ENCODE measurements at regions of chr18 and their contacts with region 1.

Region 1: DNA sequence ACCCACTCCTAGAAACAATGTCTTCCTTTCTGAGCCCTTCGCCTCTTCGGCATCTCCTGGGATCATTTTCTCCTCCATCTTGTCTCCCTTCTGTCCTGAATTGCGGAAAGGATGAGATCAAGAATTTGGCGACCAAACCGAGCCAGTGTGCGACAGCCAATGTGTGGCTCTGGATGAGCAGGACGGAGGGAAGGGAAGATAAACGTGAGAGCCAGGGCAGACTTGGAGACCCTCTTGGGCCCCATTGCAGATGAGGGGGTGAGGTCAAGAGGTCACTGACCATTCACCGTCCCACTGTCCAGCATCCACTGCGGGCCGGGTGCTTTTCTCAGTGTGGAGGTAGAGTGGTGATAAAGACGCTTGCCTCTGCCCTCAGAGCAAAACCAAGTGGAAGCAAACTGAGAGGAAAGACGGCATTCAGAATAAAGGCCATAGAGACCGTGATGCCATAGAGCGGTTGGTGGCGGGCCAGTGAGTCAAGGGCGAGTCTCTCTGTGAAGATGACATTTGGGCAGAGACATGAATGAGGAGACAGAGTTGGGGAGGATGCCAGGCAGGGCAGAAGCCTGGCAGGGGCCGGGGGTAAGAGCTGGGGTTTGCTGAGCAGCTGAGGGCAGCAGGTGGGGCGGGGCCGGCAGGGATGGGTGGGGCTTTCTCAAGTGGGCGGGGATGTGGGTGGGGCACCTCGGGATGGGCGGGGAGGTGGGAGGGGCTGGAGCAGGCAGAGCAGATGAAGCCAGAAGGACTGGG is 55.6 kb downstream of the ACAA2 start:
- DNase-seq: no peak
- H3K4me3 ChIP-seq: no peak overlapping the region
- H3K27ac ChIP-seq: no peak overlapping the region
- H3K27me3 ChIP-seq: peaks cover 0 to 10% (median 0%) of the 10 kb centered on the region in 45 donors
- CTCF ChIP-seq: no peak

Region 2: DNA sequence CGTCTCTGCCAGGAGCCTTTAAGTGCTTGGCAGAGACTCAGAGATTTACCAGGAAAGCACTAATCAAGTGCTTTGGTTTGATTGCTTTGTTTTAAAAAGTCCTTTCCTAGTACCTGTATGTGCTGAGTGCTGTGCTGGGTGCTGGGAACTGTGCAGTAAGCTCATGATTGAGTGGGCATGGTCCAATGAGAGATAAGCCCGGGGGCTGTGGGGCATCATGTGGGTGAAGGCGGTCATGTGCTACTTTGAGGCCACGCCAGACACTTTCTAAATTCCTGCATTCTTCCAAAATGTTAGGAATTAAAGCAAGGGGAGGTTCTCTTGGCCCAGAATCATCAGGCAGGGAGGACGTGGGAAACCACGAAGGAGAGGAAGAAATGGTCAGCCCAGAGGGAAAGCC is 53.4 kb before region 1 on chr18:
- intact Hi-C with region 1: loop called in 1 of 2 experiments (anchors 10 kb)
- DNase-seq: no peak
- H3K4me3 ChIP-seq: no peak overlapping the region
- H3K27ac ChIP-seq: no peak overlapping the region
- H3K27me3 ChIP-seq: no peaks in the 10 kb centered on the region
- CTCF ChIP-seq: no peak

Measured in dorsolateral prefrontal cortex (tissue), 120 donors.